Cardiac septum (tissue), 1 donor: ENCODE measurements at regions of chr12 and their contacts with region 1.

Region 1: DNA sequence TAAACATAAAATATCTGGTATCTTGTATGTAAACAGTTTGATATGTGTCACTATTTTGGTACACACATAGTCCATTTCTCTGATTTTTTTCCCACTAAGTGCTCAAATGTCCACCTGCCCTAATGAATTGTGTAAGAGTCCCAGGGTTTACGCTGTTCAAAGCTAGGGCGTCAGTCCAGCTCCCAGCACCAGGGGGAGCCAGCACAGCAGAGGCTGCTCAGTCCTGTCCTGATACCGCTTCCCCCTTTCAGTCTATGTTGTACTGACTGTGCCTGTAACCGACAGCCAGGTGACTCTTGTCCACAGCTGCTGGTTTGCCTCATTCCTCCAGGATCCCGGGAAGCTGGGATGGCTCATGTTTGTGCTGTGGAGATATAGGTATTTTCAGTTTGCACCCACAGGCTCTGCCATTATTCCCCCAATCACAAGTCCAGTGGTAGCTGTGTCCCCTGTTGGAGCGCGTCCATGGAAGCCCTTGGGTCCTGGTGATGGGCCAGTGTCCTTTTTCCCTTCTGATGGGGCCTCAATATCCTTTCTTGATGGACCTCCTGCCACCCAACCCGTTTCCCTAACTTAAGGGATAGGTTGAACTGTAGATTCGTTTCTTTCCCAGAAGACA is 242.0 kb downstream of the NEDD1 start:
- DNase-seq: peak; percentile 75

Region 2: GRCh38 chr12:97167598-97167997 is 18.5 kb after region 1 on chr12:
- intact Hi-C with region 1: no loop called
- DNase-seq: no peak

Region 3: GRCh38 chr12:97404543-97404942 is 255.5 kb after region 1 on chr12:
- intact Hi-C with region 1: loop called (anchors 2 kb)
- DNase-seq: no peak